ENCODE measurements at regions of chr13 and their contacts with region 1.

Region 1: GRCh38 chr13:79541426-79542049 is 60.6 kb downstream of the NDFIP2 start:
- DNase-seq: no peak
- ATAC-seq: peak in 3 of 4 donors; percentile 56 to 80 (median 59)
- H3K4me3 ChIP-seq: no peak overlapping the region
- H3K27ac ChIP-seq: no peak overlapping the region
- H3K4me1 ChIP-seq: peaks cover 3% of the 10 kb centered on the region
- H3K27me3 ChIP-seq: no peaks in the 10 kb centered on the region
- CTCF ChIP-seq: peak; percentile 94

Region 2: GRCh38 chr13:78862446-78862845 is 679.1 kb before region 1 on chr13:
- intact Hi-C with region 1: no loop called
- DNase-seq: no peak
- ATAC-seq: no peak
- H3K4me3 ChIP-seq: no peak overlapping the region
- H3K27ac ChIP-seq: no peak overlapping the region
- H3K4me1 ChIP-seq: no peaks in the 10 kb centered on the region
- H3K27me3 ChIP-seq: no peaks in the 10 kb centered on the region
- CTCF ChIP-seq: no peak

Region 3: GRCh38 chr13:79423801-79424642 is 117.5 kb before region 1 on chr13:
- intact Hi-C with region 1: loop called (anchors 1 to 2 kb)
- DNase-seq: no peak
- ATAC-seq: peak in 2 of 4 donors; percentile 70
- H3K4me3 ChIP-seq: no peak overlapping the region
- H3K27ac ChIP-seq: no peak overlapping the region
- H3K4me1 ChIP-seq: no peaks in the 10 kb centered on the region
- H3K27me3 ChIP-seq: no peaks in the 10 kb centered on the region
- CTCF ChIP-seq: peak; percentile 74